ENCODE measurements at regions of chr1 and their contacts with region 1.

Region 1: GRCh38 chr1:64966158-64966971 is at the start of gene JAK1:
- DNase-seq: peak; percentile 89 to 96
- ATAC-seq: peak; percentile 78 to 90 (median 78)
- H3K4me3 ChIP-seq: peak within 1 kb of the TSS; percentile 76
- H3K4me3 Mint-ChIP-seq: peak within 1 kb of the TSS; percentile 94
- H3K27ac ChIP-seq: peak within 1 kb of the TSS; percentile 89
- H3K27ac Mint-ChIP-seq: peak within 1 kb of the TSS in 1 of 2 donors; percentile 94
- H3K4me1 ChIP-seq: peaks cover 27% of the 10 kb centered on the region
- H3K4me1 Mint-ChIP-seq: peaks cover 50 to 51% of the 10 kb centered on the region in 2 donors
- H3K27me3 ChIP-seq: no peaks in the 10 kb centered on the region
- H3K27me3 Mint-ChIP-seq: no peaks in the 10 kb centered on the region
- CTCF ChIP-seq: no peak
- total RNA-seq, gene JAK1: 507 to 626 (median 526) TPM

Region 2: DNA sequence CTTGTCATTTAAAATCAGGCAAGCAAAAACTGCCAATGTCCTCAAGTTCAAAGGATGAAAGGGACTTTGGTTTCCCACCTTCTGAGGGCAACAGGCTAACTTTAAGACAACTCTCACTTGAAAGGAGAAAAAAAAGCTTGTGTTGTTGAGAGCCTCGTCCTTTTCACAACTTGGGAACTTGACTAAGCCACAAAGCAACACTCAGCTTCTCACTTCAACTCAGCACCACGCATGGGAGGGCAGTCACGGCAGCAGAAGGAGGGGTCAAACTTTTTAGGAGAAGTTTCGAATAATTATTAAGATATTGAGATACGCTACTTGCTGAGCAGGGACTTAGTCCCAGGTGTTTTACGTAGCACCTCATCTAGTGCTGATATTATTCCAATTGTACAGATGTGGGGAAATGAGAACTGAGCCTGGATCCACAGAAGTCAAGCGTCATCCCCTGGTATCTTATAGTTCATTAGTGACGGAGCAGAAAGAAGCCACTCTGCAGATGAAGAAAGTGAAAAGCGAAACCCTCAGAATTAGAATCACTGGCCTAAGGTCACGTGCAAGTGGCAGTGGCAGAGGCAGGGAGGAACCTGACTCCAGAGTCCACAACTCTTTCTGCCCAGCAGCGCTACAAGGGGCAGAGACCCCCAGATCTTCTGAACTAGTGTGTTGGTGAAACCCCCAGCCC is 83.7 kb before region 1 on chr1:
- intact Hi-C with region 1: loop called (anchors 2 kb)
- DNase-seq: peak; percentile 45 to 60
- ATAC-seq: peak; percentile 73 to 88 (median 85)
- H3K4me3 ChIP-seq: no peak overlapping the region
- H3K4me3 Mint-ChIP-seq: peak overlapping the region; percentile 75
- H3K27ac ChIP-seq: peak overlapping the region; percentile 80
- H3K27ac Mint-ChIP-seq: peak overlapping the region; percentile 79 to 93
- H3K4me1 ChIP-seq: peaks cover 70% of the 10 kb centered on the region
- H3K4me1 Mint-ChIP-seq: peaks cover 94 to 98% of the 10 kb centered on the region in 2 donors
- H3K27me3 ChIP-seq: no peaks in the 10 kb centered on the region
- H3K27me3 Mint-ChIP-seq: no peaks in the 10 kb centered on the region
- CTCF ChIP-seq: no peak

Region 3: GRCh38 chr1:64948905-64949833 is 17.2 kb before region 1 on chr1:
- intact Hi-C with region 1: loop called (anchors 1 kb)
- DNase-seq: peak in 1 of 2 donors; percentile 57
- ATAC-seq: peak; percentile 69 to 79 (median 74)
- H3K4me3 ChIP-seq: no peak overlapping the region
- H3K4me3 Mint-ChIP-seq: peak overlapping the region; percentile 69
- H3K27ac ChIP-seq: peak overlapping the region; percentile 69
- H3K27ac Mint-ChIP-seq: no peak overlapping the region
- H3K4me1 ChIP-seq: peaks cover 44% of the 10 kb centered on the region
- H3K4me1 Mint-ChIP-seq: peaks cover 75 to 83% of the 10 kb centered on the region in 2 donors
- H3K27me3 ChIP-seq: no peaks in the 10 kb centered on the region
- H3K27me3 Mint-ChIP-seq: no peaks in the 10 kb centered on the region
- CTCF ChIP-seq: no peak

Region 4: GRCh38 chr1:65002508-65003315 is 36.3 kb after region 1 on chr1:
- intact Hi-C with region 1: loop called (anchors 1 kb)
- DNase-seq: peak; percentile 85 to 86
- ATAC-seq: peak; percentile 88 to 94 (median 88)
- H3K4me3 ChIP-seq: peak overlapping the region; percentile 54
- H3K4me3 Mint-ChIP-seq: peak overlapping the region; percentile 66
- H3K27ac ChIP-seq: peak overlapping the region; percentile 44
- H3K27ac Mint-ChIP-seq: peak overlapping the region; percentile 4 to 92
- H3K4me1 ChIP-seq: peaks cover 23% of the 10 kb centered on the region
- H3K4me1 Mint-ChIP-seq: peaks cover 15 to 30% of the 10 kb centered on the region in 2 donors
- H3K27me3 ChIP-seq: no peaks in the 10 kb centered on the region
- H3K27me3 Mint-ChIP-seq: peaks cover 0 to 5% of the 10 kb centered on the region in 2 donors
- CTCF ChIP-seq: no peak

Region 5: DNA sequence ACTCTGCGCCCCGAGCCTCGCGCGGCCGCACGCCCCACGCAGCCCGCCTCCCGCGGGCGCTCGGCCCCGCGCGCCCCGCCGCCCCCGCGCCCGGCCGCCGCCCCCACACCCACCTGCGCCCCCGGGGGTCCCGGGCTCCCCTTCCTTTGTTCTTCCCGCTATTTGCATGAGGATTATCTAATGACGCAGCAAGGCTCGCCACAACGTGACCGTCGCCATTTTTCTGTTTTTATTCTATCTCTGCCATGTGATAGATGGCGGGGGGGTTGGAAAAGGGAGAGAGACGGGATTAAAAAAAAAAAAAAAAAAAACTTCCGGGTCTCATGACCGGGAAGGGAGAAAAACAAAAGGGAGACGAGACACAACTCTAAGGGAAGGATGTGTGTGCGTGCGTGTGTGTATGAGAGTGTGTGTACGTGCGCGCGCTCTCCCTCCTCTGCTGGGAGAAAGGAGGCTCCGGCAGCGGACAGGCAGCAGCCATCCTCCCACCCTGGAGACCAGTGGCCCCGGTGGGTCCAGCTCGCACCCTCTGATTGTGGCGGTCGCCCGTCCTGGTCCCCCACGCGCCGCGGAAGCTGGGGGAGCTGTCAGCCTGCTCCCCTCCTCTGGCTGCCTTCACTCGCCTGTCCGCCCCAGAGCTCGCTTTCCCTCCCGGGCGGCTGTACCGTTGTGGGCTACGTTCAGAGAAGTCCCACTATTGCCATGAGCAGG is 101.3 kb after region 1 on chr1:
- intact Hi-C with region 1: loop called (anchors 2 kb)
- DNase-seq: peak; percentile 47 to 84
- ATAC-seq: peak; percentile 13 to 42 (median 14)
- H3K4me3 ChIP-seq: peak overlapping the region; percentile 74
- H3K4me3 Mint-ChIP-seq: peak overlapping the region; percentile 99
- H3K27ac ChIP-seq: peak overlapping the region; percentile 91
- H3K27ac Mint-ChIP-seq: peak overlapping the region; percentile 97
- H3K4me1 ChIP-seq: peaks cover 19% of the 10 kb centered on the region
- H3K4me1 Mint-ChIP-seq: peaks cover 44 to 54% of the 10 kb centered on the region in 2 donors
- H3K27me3 ChIP-seq: no peaks in the 10 kb centered on the region
- H3K27me3 Mint-ChIP-seq: no peaks in the 10 kb centered on the region
- CTCF ChIP-seq: no peak

Measured in natural killer cell (primary cell).